H1 (cell line): ENCODE measurements at regions of chr19 and their contacts with region 1.

Region 1: GRCh38 chr19:13012690-13013608 is 17.7 kb downstream of the NFIX start:
- DNase-seq: no peak
- H3K4me3 ChIP-seq: peak overlapping the region in 1 of 4 experiments; percentile 37; a peak in 4 of 8 replicates
- H3K27ac ChIP-seq: no peak overlapping the region
- H3K4me1 ChIP-seq: peaks cover 5 to 41% (median 31%) of the 10 kb centered on the region in 4 experiments
- H3K27me3 ChIP-seq: peaks cover 91 to 100% (median 100%) of the 10 kb centered on the region in 4 experiments
- CTCF ChIP-seq: no peak
- EP300 ChIP-seq: no peak
- POLR2A ChIP-seq: no peak
- RAD21 ChIP-seq: no peak

Region 2: DNA sequence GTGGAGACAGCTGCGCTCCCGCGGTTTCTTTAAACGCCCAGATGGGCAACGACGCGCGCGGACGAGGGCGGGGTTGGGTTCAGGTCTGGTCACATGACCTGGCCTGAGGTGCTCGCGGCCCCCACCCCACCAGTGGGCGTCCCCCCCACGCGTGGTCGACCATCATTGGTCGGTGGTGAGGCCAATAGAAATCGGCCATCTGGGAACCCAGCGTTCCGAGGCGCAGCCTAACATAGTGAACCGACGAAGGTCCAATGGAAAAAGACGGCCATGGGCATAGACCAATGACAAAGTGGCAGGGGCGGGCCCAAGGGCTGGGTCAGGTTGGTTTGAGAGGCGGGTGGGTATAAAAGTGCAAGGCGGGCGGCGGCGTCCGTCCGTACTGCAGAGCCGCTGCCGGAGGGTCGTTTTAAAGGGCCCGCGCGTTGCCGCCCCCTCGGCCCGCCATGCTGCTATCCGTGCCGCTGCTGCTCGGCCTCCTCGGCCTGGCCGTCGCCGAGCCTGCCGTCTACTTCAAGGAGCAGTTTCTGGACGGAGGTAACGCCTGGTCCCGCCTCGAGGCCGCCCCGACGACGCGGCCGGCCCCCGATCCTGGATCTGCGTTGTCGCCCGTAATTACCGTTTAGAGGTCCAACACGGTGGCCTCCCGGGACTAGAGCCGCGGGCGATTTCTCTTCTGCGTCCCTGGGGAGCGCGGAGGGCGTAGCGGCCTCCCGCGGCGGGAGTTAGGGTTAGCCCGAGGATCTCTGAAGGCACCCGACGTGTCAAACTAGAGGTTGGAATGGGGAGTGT is 74.5 kb before region 1 on chr19 and contains the start of gene CALR:
- CTCF ChIA-PET with region 1: no interaction called
- POLR2A ChIA-PET with region 1: no interaction called
- DNase-seq: peak; percentile 91 to 98
- H3K4me3 ChIP-seq: peak within 1 kb of the TSS; percentile 68 to 97 (median 93)
- H3K27ac ChIP-seq: peak within 1 kb of the TSS; percentile 32; the same call in 1 of the 2 replicates
- H3K4me1 ChIP-seq: peaks cover 0 to 23% (median 13%) of the 10 kb centered on the region in 4 experiments; a peak in 6 of 7 replicates
- H3K27me3 ChIP-seq: no peaks in the 10 kb centered on the region
- CTCF ChIP-seq: no peak
- EP300 ChIP-seq: no peak
- POLR2A ChIP-seq: peak; percentile 98 to 99
- RAD21 ChIP-seq: no peak
- total RNA-seq, gene CALR: 1,155 and 1,177 TPM in 2 replicates

Region 3: DNA sequence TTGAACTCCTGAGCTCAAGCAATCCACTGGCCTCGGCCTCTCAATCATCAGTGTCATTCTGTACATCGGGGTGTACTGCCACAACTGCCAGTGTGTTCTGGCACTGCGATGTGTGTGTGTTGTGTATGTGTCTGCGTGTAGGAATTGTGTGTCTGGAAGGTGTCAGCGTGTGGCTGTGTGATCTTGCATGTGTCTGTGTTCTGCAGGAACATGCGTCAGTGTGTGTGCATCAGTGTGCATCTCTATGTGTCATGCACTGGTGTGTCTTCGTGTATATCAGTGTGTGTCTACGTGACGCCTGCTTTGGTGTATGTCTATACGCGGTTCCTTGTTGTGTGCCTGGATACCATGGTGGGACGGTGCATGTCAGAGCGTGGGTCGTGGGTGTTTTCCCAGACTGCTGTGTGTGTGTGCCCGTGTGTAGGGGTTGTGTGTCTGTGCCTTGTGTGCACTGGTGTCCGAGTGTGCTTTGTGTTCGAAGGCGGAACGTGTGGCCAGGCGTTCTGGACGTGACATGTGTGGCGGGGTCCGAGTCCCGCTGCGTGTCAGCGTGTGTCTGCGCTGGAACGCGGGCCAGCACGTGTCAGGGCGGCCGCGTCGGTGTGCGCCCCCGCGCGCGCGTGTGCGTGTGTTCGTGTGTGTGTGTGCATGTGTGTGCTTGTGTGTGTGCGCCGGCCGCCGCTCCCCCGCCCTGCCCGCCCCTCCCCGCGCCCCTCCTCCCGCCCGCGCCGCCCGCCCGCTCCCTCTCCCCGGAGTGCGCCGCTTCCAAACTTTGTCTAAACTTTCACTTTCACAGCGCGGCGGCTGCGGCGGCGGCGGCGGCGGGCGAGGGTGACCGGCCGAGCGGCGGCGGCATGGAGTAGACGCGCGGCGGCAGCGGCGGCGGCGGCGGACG is 18.0 kb before region 1 on chr19 and contains the start of gene NFIX:
- CTCF ChIA-PET with region 1: interaction called, 10 read pairs
- POLR2A ChIA-PET with region 1: interaction called, 6 read pairs
- DNase-seq: no peak
- H3K4me3 ChIP-seq: peak within 1 kb of the TSS; percentile 21 to 50 (median 30); a peak in 7 of 8 replicates
- H3K27ac ChIP-seq: no peak within 1 kb of the TSS
- H3K4me1 ChIP-seq: peaks cover 0 to 12% (median 8%) of the 10 kb centered on the region in 4 experiments; a peak in 5 of 7 replicates
- H3K27me3 ChIP-seq: peaks cover 53 to 89% (median 82%) of the 10 kb centered on the region in 4 experiments
- CTCF ChIP-seq: no peak
- EP300 ChIP-seq: no peak
- POLR2A ChIP-seq: no peak
- RAD21 ChIP-seq: no peak
- total RNA-seq, gene NFIX: 0.20 and 0.27 TPM in 2 replicates

Region 4: GRCh38 chr19:13002166-13002898 is 10.6 kb before region 1 on chr19:
- CTCF ChIA-PET with region 1: interaction called, 19 read pairs
- POLR2A ChIA-PET with region 1: interaction called, 3 read pairs
- DNase-seq: no peak
- H3K4me3 ChIP-seq: no peak overlapping the region
- H3K27ac ChIP-seq: no peak overlapping the region
- H3K4me1 ChIP-seq: peaks cover 0 to 6% (median 0%) of the 10 kb centered on the region in 4 experiments; a peak in 1 of 7 replicates
- H3K27me3 ChIP-seq: peaks cover 16 to 94% (median 74%) of the 10 kb centered on the region in 4 experiments
- CTCF ChIP-seq: no peak
- EP300 ChIP-seq: no peak
- POLR2A ChIP-seq: no peak
- RAD21 ChIP-seq: no peak

Region 5: GRCh38 chr19:13022859-13023636 is 10.1 kb after region 1 on chr19:
- CTCF ChIA-PET with region 1: interaction called, 175 read pairs
- POLR2A ChIA-PET with region 1: interaction called, 17 read pairs
- DNase-seq: no peak
- H3K4me3 ChIP-seq: peak overlapping the region in 2 of 4 experiments; percentile 5 to 46; a peak in 3 of 8 replicates
- H3K27ac ChIP-seq: no peak overlapping the region
- H3K4me1 ChIP-seq: peaks cover 11 to 34% (median 29%) of the 10 kb centered on the region in 4 experiments
- H3K27me3 ChIP-seq: peaks cover 81 to 98% (median 96%) of the 10 kb centered on the region in 4 experiments
- CTCF ChIP-seq: no peak
- EP300 ChIP-seq: no peak
- POLR2A ChIP-seq: no peak
- RAD21 ChIP-seq: no peak

Region 6: DNA sequence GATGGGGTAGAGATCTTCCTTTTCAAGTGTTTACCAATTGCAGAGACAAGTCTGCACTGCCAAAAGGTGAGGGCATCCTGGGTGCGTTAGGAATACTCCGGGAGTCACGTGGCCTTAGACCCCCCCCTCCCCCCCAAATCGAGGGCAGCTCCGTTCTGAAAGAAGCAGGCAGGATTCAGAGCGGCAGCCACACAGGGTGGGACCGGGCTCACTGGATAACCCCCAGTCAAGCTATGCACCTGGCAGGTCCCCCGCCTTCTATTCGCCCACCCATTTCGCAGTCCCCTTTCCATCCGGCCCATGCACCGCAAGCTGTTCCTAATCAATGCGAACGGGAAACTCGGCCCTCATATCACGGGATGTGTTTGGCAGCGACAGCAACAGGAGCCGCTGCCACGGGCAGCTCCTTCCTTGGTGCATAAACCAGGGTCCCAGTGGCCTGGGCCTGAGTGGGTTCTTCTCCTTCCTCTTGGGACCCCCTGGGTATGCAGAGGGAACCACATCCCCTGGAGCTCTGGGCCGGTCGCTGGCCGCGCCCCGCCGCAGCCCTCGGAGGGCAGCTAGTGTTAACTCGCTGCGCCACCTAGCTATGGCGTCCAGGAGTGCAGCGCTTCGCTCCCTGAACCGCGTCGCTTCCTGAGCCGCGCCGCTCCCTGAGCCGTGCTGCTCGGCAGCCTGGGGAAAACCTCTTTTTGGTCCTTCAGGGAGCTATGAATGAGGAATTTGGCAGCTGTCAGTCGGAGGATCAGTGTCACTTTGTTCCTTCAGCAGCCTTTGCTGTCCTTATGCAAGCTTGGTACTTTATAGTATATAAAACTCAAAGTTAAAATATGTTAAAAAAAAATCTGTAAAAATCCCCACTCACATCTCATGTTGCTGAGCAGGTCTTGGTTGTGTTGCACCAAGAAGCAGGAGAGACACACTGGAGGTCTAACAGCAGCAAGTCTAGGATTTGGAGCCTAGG is 48.3 kb after region 1 on chr19:
- CTCF ChIA-PET with region 1: interaction called, 140 read pairs
- POLR2A ChIA-PET with region 1: interaction called, 3 read pairs
- DNase-seq: peak in 1 of 2 experiments; percentile 97
- H3K4me3 ChIP-seq: peak overlapping the region; percentile 17 to 60 (median 46); a peak in 7 of 8 replicates
- H3K27ac ChIP-seq: no peak overlapping the region
- H3K4me1 ChIP-seq: peaks cover 0 to 14% (median 9%) of the 10 kb centered on the region in 4 experiments; a peak in 6 of 7 replicates
- H3K27me3 ChIP-seq: peaks cover 56 to 76% (median 72%) of the 10 kb centered on the region in 4 experiments
- CTCF ChIP-seq: peak; percentile 95 to 98 (median 95)
- EP300 ChIP-seq: peak in 1 of 2 experiments; percentile 46; a peak in 1 of 3 replicates
- POLR2A ChIP-seq: no peak
- RAD21 ChIP-seq: peak; percentile 82 to 91